Tibial artery (tissue), 4 donors: ENCODE measurements at regions of chr21 and their contacts with region 1.

Region 1: DNA sequence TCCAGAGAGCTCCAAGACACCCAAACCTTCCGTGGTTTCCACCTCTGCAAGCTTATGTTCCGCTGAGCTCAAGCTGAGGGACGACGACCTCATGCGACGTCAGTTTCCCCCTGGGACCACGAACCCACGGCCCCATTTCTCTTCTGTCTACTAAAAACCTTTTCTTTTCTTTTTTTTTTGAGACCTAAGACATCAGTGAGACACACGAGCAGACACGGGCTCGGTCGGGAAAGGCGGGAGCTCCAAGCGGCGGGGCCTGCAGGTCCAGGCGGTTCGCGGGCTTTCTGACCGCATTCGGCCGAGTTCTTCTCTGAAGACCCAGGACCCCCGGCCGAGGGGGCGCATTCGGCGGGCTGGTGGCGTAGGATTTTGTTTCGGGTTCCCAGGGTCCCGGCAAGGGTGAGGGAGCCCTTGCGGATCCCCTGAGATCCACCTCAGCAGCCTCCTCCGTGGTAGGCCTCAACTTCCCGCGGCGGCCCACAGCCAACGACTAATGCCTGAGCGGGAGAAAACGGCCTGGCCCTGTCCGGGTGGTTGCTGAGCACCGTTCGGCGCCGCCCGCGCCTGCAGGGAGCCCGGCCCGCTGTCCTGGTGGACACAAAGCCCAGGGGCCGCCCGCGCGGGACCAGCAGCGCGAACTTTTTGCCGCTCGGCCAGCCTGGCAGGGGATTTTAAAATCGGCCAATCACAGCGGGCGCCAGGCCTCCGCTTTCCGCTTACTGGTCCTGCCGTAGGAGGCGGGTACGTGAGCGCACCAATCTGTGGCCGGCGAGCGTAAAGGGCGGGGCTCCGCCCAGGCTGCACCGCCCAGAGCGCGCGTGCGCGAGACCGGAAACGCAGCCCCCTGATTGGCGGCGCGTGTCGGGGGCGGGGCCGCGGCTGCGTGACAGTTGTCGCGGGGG is at the start of gene C21orf58:
- DNase-seq: peak; percentile 97 to 99
- H3K4me3 ChIP-seq: peak within 1 kb of the TSS; percentile 70 to 100
- H3K27ac ChIP-seq: peak within 1 kb of the TSS; percentile 85 to 99
- H3K4me1 ChIP-seq: peaks cover 0 to 27% (median 20%) of the 10 kb centered on the region in 4 donors
- H3K27me3 ChIP-seq: no peaks in the 10 kb centered on the region
- CTCF ChIP-seq: no peak

Region 2: GRCh38 chr21:46228345-46229051 is 95.0 kb before region 1 on chr21 and contains the start of gene LSS:
- intact Hi-C with region 1: loop called (anchors 10 kb)
- DNase-seq: peak; percentile 97 to 99
- H3K4me3 ChIP-seq: peak within 1 kb of the TSS; percentile 99 to 100
- H3K27ac ChIP-seq: peak within 1 kb of the TSS; percentile 94 to 96
- H3K4me1 ChIP-seq: peaks cover 0 to 39% (median 31%) of the 10 kb centered on the region in 4 donors
- H3K27me3 ChIP-seq: no peaks in the 10 kb centered on the region
- CTCF ChIP-seq: peak in 1 of 2 experiments; percentile 8

Region 3: DNA sequence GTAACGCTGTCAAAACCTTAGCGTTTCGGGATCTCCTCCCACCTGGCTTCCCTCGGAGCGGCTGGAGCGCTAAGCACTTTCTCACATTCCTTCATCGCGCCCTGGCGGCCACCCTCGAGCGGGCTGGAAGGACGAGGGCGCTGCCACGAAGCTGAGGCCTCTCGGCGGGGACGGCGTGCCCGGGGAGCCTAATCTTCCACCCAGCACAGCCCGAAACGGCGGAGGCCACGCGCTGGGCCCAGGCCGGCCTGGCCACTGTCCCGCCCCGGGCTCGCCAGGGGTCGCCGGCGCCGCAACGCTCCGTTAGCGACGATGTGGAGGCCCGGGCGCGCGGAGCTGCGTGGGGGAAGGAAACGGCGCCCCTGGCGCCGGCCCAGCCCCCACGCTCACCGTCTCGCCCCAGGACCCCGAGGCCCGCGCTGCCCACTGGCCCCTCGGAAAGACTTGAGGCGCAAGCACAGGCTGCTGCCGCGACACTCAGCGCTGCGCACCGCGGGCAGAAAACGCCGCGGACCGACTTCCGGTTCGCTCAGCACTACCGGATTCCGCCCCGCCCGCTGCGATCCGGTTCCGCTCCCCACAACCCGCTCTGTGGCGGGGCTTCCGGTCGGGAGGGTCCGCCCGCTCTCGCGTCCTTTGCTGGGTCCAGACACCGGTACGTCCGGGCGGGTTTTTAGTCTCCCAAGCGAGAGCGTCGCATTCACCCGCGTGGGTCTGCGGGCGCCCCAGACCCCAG is 37.5 kb before region 1 on chr21 and contains the start of gene YBEY:
- intact Hi-C with region 1: loop called (anchors 2 kb)
- DNase-seq: peak; percentile 81 to 93
- H3K4me3 ChIP-seq: peak within 1 kb of the TSS; percentile 77 to 79
- H3K27ac ChIP-seq: peak within 1 kb of the TSS; percentile 90 to 96
- H3K4me1 ChIP-seq: peaks cover 0 to 54% (median 40%) of the 10 kb centered on the region in 4 donors
- H3K27me3 ChIP-seq: no peaks in the 10 kb centered on the region
- CTCF ChIP-seq: peak; percentile 40